ENCODE measurements at regions of chr16 and their contacts with region 1.

Region 1: DNA sequence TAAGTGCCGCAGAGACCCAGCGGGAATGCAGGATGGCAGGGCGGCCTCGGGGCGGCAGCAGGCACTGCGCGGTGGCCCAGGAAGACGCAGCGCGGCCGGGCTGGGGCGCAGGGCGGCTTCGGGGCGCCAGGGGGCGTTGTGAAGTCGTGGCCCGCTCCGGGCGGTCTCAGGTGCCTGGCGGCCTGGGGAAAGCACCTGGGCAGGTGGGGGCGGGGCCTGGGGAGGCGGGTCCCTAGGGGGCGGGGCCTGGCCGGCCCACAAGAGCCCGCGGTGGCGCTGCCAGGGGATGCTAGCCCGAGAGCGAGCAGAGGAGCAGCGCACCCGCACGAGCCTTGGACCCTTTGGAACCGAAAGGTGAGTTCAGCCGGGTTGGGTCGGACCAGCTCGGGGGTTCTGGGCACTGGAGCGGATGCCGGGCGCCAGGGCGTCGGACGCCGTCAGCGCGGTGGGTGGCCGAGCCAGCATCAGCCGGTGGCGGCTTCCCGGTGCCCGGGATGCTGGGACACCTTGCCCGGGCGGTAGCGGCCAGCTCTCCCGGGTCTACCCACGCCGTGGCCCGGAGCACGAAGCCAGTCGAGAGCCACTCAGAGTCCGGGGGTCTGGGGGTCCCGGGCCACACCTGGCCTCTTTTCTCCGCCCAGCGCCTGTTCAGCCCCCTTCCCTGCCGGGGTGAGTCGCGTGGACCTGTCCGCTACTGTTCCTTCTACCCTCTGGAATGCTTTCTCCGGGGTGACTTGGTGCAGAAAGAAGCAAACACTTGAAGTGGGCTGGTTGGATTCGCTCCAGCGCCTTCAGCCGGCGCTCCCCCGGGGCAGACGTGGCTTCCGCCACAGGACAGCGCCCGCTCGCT is at the start of gene SCNN1G:
- DNase-seq: peak; percentile 57 to 83
- ATAC-seq: peak; percentile 86 to 97 (median 97)
- H3K4me3 ChIP-seq: no peak within 1 kb of the TSS
- H3K4me3 Mint-ChIP-seq: peak within 1 kb of the TSS; percentile 38
- H3K27ac ChIP-seq: no peak within 1 kb of the TSS
- H3K27ac Mint-ChIP-seq: no peak within 1 kb of the TSS
- H3K4me1 ChIP-seq: peaks cover 11% of the 10 kb centered on the region
- H3K4me1 Mint-ChIP-seq: peaks cover 6 to 7% of the 10 kb centered on the region in 2 donors
- H3K27me3 ChIP-seq: peaks cover 23% of the 10 kb centered on the region
- H3K27me3 Mint-ChIP-seq: peaks cover 48 to 73% of the 10 kb centered on the region in 2 donors
- CTCF ChIP-seq: peak; percentile 67
- total RNA-seq, gene SCNN1G: not detected

Region 2: GRCh38 chr16:23245268-23245667 is 62.6 kb after region 1 on chr16:
- intact Hi-C with region 1: no loop called
- DNase-seq: no peak
- ATAC-seq: no peak
- H3K4me3 ChIP-seq: no peak overlapping the region
- H3K4me3 Mint-ChIP-seq: no peak overlapping the region
- H3K27ac ChIP-seq: no peak overlapping the region
- H3K27ac Mint-ChIP-seq: no peak overlapping the region
- H3K4me1 ChIP-seq: no peaks in the 10 kb centered on the region
- H3K4me1 Mint-ChIP-seq: no peaks in the 10 kb centered on the region
- H3K27me3 ChIP-seq: no peaks in the 10 kb centered on the region
- H3K27me3 Mint-ChIP-seq: peaks cover 7 to 9% of the 10 kb centered on the region in 2 donors
- CTCF ChIP-seq: no peak

Region 3: GRCh38 chr16:23435500-23435899 is 252.8 kb after region 1 on chr16:
- intact Hi-C with region 1: loop called (anchors 10 kb)
- DNase-seq: peak; percentile 50 to 79
- ATAC-seq: peak; percentile 84 to 93 (median 93)
- H3K4me3 ChIP-seq: no peak overlapping the region
- H3K4me3 Mint-ChIP-seq: no peak overlapping the region
- H3K27ac ChIP-seq: no peak overlapping the region
- H3K27ac Mint-ChIP-seq: no peak overlapping the region
- H3K4me1 ChIP-seq: no peaks in the 10 kb centered on the region
- H3K4me1 Mint-ChIP-seq: no peaks in the 10 kb centered on the region
- H3K27me3 ChIP-seq: no peaks in the 10 kb centered on the region
- H3K27me3 Mint-ChIP-seq: no peaks in the 10 kb centered on the region
- CTCF ChIP-seq: peak; percentile 84

Region 4: GRCh38 chr16:24297375-24297774 is 1114.7 kb after region 1 on chr16:
- intact Hi-C with region 1: no loop called
- DNase-seq: no peak
- ATAC-seq: no peak
- H3K4me3 ChIP-seq: no peak overlapping the region
- H3K4me3 Mint-ChIP-seq: no peak overlapping the region
- H3K27ac ChIP-seq: no peak overlapping the region
- H3K27ac Mint-ChIP-seq: no peak overlapping the region
- H3K4me1 ChIP-seq: no peaks in the 10 kb centered on the region
- H3K4me1 Mint-ChIP-seq: no peaks in the 10 kb centered on the region
- H3K27me3 ChIP-seq: no peaks in the 10 kb centered on the region
- H3K27me3 Mint-ChIP-seq: peaks cover 13 to 36% of the 10 kb centered on the region in 2 donors
- CTCF ChIP-seq: no peak

Measured in natural killer cell (primary cell).